ENCODE measurements at regions of chr3 and their contacts with region 1.

Region 1: DNA sequence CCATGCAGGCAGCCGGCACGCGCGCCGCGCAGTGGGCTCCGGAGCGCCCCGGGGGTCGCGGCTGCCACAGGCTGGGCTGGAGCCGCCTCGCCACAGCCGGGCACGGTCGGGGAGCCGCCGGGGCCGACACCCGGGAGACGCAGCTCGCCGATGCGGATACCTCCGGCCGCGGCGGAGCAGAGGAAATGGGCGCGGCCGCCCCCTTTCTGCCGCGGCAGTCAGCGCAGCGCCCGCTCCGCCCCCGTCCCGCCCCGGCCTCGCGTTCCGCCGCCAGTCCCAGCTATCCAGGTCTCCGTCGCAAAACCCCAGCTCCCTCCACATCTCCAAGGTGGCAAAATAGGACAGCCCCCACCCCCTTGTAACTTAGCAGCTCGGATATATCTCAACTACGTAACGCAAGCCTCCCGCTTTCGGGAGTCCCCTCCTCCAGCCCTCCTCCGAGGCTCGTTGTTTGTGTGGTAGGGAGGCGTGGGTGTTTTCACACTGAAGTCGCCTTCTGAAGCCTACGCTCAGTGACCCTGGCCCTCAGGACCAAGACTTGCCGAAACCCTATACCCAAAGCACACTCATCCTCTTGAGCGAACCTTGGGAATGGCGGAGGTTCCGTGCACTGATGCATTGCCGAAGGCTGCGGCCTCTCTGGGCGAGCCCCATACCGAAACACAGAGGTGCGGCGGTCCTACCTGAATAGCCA is at the start of gene SH3BP5:
- DNase-seq: peak; percentile 64 to 90
- H3K4me3 ChIP-seq: peak within 1 kb of the TSS; percentile 82 to 88
- H3K27ac ChIP-seq: peak within 1 kb of the TSS; percentile 88 to 93
- H3K4me1 ChIP-seq: peaks cover 0 to 31% (median 15%) of the 10 kb centered on the region in 4 donors
- H3K27me3 ChIP-seq: no peaks in the 10 kb centered on the region
- CTCF ChIP-seq: peak; percentile 82 to 87

Region 2: GRCh38 chr3:15268033-15268631 is 64.4 kb before region 1 on chr3:
- intact Hi-C with region 1: loop called (anchors 2 kb)
- DNase-seq: peak; percentile 90
- H3K4me3 ChIP-seq: no peak overlapping the region
- H3K27ac ChIP-seq: peak overlapping the region; percentile 64 to 66
- H3K4me1 ChIP-seq: peaks cover 0 to 43% (median 21%) of the 10 kb centered on the region in 4 donors
- H3K27me3 ChIP-seq: no peaks in the 10 kb centered on the region
- CTCF ChIP-seq: peak; percentile 91 to 95

Region 3: GRCh38 chr3:15377961-15378791 is 45.6 kb after region 1 on chr3:
- intact Hi-C with region 1: loop called (anchors 5 kb)
- DNase-seq: peak; percentile 96 to 97
- H3K4me3 ChIP-seq: no peak overlapping the region
- H3K27ac ChIP-seq: peak overlapping the region; percentile 68 to 75
- H3K4me1 ChIP-seq: peaks cover 0 to 4% (median 0%) of the 10 kb centered on the region in 4 donors
- H3K27me3 ChIP-seq: no peaks in the 10 kb centered on the region
- CTCF ChIP-seq: peak; percentile 85 to 96